Transverse colon (tissue), 4 donors: ENCODE measurements at regions of chr15 and their contacts with region 1.

Region 1: DNA sequence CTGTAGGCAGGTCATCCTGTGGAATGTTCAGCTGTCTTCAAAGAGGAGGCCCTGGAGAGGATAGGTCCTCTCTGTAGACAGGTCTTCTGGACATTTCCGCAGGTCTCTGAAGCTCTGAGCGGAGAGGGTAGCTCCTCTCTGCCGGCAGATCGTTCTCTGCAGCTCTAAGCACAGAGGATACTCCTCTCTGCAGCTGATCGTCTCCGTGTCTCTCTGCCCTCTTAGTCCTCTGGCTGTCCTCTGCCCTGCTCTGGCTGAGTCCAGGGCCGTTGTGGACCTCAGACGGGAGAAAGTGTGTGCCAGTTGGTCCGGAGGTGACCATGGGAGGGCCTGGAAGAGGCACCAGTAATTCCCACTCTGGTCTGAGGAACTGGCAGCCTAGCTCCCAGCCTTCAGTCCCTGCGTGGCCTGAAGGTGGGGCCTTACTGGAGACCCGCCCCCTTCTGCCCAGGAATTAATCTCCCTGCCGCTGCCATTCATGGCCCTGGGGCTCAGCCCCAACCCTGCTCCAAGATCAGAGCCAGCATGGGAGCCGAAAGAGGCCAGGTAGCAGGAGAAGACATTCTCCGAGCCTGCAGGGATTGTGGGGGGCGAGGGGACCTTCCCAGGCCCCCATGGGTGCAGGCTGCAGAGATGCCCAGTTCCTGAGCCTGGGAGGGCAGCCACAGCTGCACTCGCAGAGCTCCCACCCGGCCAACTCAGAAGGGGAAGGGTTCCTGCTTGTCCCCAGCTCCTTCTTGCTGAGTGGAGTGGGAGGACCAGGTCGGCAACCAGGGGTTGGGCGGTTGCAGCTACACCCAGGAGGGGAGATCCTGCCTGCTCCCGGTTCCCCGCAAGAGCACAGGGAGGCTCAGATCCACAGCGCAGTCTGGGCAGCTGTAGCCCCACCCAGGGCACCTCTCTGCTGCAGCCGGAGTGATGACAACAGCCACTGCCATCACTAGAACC is 488.7 kb downstream of the RSL24D1 start:
- DNase-seq: no peak
- H3K4me3 ChIP-seq: no peak overlapping the region
- H3K27ac ChIP-seq: no peak overlapping the region
- H3K4me1 ChIP-seq: no peaks in the 10 kb centered on the region
- H3K27me3 ChIP-seq: no peaks in the 10 kb centered on the region
- CTCF ChIP-seq: no peak
- EP300 ChIP-seq: no peak
- POLR2A ChIP-seq: no peak

Region 2: DNA sequence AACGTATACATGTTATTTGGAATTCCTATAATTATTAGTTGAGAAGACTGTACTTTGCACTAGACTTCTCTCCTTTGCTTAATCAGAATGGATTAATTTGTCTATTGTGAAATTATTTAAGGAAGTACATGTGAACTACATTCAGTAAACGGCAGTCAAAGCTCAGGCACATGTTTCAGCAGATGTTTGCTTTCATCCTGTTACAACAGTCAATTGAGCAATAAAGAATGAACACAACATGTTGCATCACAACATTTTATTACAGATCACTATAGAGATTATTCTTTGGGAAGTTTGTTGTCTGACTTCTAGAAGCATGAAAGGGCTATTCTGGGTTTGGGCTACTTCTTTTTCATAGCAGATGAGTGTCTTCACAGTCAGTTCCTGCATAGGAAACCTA is 542.3 kb after region 1 on chr15:
- in situ Hi-C with region 1: no loop called
- intact Hi-C with region 1: no loop called
- DNase-seq: peak; percentile 18
- H3K4me3 ChIP-seq: no peak overlapping the region
- H3K27ac ChIP-seq: peak overlapping the region; percentile 63 to 73 (median 68)
- H3K4me1 ChIP-seq: peaks cover 17 to 56% (median 24%) of the 10 kb centered on the region in 4 donors
- H3K27me3 ChIP-seq: no peaks in the 10 kb centered on the region
- CTCF ChIP-seq: no peak
- EP300 ChIP-seq: no peak
- POLR2A ChIP-seq: no peak

Region 3: GRCh38 chr15:55290528-55291057 is 582.5 kb after region 1 on chr15:
- in situ Hi-C with region 1: no loop called
- intact Hi-C with region 1: loop called (anchors 5 kb)
- DNase-seq: peak; percentile 88
- H3K4me3 ChIP-seq: peak overlapping the region; percentile 53 to 95 (median 71)
- H3K27ac ChIP-seq: peak overlapping the region; percentile 90 to 96 (median 92)
- H3K4me1 ChIP-seq: peaks cover 0 to 16% (median 10%) of the 10 kb centered on the region in 4 donors
- H3K27me3 ChIP-seq: no peaks in the 10 kb centered on the region
- CTCF ChIP-seq: peak; percentile 86 to 91 (median 88)
- EP300 ChIP-seq: no peak
- POLR2A ChIP-seq: no peak